ENCODE measurements at regions of chr3 and their contacts with region 1.

Region 1: GRCh38 chr3:134308350-134308891 is 57.8 kb upstream of the RYK start:
- DNase-seq: no peak
- H3K4me3 ChIP-seq: peak overlapping the region in 1 of 4 donors; percentile 41
- H3K27ac ChIP-seq: peak overlapping the region; percentile 57 to 95 (median 86)
- H3K4me1 ChIP-seq: peaks cover 27 to 58% (median 37%) of the 10 kb centered on the region in 3 donors
- H3K27me3 ChIP-seq: peaks cover 0 to 2% (median 0%) of the 10 kb centered on the region in 4 donors
- CTCF ChIP-seq: peak; percentile 83 to 100 (median 100)
- POLR2A ChIP-seq: no peak

Region 2: DNA sequence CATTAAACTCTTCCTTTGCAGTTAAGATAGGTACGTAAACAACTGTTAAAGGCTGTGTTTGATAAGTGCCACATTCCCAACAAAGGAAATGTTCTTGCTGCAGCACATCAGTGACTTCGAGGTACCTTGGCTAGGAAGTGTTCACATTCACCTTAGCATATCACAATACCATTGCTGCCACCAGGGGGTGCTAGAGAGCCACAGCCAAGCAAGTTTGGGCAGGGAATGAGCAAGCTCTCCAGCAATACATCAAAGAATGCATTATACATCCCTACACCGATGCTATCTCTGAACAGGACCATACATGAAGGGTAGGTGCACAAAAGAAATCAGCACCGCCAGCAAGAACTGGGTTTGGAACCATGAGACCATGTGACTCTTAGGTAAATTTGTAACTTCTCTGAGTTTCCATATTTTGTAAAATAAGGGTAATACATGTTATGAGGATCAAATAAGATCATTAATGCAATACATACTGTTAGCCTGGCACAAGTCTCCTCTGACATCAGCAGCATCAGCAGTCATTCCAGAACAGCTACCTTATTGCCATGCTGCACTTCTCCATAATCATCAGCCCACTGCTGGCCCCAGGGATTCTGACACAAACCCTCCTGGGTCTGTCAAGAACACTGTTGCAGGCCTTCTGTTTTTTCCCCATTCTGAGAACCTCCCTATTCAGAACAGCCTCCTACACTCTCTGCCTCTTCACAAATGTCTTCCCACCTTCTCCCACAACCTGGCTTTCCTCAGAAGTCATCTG is 95.3 kb before region 1 on chr3:
- intact Hi-C with region 1: loop called (anchors 5 kb)
- DNase-seq: no peak
- H3K4me3 ChIP-seq: no peak overlapping the region
- H3K27ac ChIP-seq: no peak overlapping the region
- H3K4me1 ChIP-seq: peaks cover 0 to 14% (median 0%) of the 10 kb centered on the region in 3 donors
- H3K27me3 ChIP-seq: no peaks in the 10 kb centered on the region
- CTCF ChIP-seq: peak; percentile 89 to 98 (median 95)
- POLR2A ChIP-seq: no peak

Region 3: DNA sequence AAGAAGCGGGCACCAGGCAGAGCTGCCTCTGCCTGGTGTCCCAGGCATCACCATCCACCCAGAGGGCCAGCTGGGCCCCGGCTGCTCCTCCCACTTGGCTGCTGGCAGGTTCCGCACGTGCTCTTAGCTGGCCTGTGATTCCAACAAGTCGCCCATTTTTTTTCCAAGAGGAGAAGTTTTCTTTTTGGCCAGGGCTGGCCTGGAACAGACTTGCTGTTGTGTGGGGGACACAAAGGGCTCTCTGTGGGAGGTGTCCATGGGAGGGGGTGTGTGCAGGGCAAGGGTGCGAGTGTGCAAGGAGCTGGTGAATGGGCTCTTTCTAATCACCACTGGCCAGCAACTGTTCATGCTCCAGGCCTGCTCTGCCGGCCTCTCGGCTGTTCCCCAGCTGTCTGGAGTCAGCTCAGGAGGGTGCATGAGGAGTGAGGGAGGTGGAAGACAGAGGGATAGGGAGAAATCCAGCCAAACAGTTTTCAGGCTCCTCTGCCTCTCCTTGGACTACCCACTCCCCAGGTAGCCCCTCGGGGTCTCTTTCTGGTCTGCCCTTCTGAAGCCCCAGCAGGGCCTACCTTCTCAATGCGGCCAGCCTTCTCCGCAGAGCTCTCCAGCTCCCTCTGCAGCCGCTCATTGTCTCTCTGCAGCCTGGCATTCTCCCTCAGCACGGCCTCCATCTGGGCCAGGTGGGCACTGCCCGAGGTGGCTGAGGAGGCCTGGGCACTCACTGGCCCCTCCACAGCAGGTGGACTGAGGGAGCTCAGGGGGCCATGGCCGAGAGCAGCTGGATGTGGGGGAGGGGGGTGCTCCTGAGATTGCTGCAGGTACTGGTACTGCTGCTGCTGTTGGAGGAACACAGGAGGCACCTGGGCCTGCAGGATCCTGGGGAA is 58.7 kb after region 1 on chr3:
- intact Hi-C with region 1: loop called (anchors 5 kb)
- DNase-seq: no peak
- H3K4me3 ChIP-seq: no peak overlapping the region
- H3K27ac ChIP-seq: peak overlapping the region; percentile 82 to 100 (median 92)
- H3K4me1 ChIP-seq: peaks cover 47 to 100% (median 93%) of the 10 kb centered on the region in 3 donors
- H3K27me3 ChIP-seq: no peaks in the 10 kb centered on the region
- CTCF ChIP-seq: no peak
- POLR2A ChIP-seq: no peak

Region 4: GRCh38 chr3:134473868-134474546 is 165.6 kb after region 1 on chr3:
- intact Hi-C with region 1: loop called (anchors 5 kb)
- DNase-seq: no peak
- H3K4me3 ChIP-seq: no peak overlapping the region
- H3K27ac ChIP-seq: peak overlapping the region in 1 of 4 donors; percentile 1
- H3K4me1 ChIP-seq: peaks cover 23 to 61% (median 29%) of the 10 kb centered on the region in 3 donors
- H3K27me3 ChIP-seq: no peaks in the 10 kb centered on the region
- CTCF ChIP-seq: peak; percentile 74 to 91 (median 80)
- POLR2A ChIP-seq: no peak

Measured in esophagus squamous epithelium (tissue), 5 donors.